ENCODE measurements at regions of chr9 and their contacts with region 1.

Region 1: DNA sequence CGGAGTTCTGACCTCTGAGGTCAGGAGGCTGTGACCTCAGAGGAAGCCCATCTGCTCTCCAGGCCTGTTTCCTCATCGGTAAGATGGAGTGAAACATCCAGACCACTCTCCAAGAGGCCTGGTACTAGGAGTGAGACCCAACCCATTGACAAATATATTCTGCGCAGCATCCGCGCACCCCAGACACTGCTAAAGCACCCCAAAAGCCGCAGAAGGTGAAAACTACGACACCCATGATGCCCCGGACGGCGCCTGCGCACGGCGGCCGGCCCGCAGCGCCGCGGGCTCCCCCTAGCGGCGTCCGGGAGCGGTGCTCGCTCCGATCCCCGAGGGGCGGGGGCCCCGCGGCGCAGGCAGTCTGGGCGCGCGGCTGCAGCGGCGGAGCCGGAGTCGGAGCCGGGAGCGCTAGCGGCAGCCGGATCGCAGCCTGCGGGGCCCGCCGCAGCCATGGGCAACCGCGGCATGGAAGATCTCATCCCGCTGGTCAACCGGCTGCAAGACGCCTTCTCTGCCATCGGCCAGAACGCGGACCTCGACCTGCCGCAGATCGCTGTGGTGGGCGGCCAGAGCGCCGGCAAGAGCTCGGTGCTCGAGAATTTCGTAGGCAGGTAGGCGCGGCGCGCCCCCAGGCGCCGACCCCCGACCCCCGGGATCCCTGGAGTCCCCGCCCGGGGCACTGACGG is at the start of gene DNM1:
- DNase-seq: peak; percentile 81
- H3K4me3 ChIP-seq: peak within 1 kb of the TSS; percentile 64
- H3K27ac ChIP-seq: no peak within 1 kb of the TSS
- H3K4me1 ChIP-seq: peaks cover 14% of the 10 kb centered on the region
- CTCF ChIP-seq: peak; percentile 78
- total RNA-seq, gene DNM1: 0.08 and 0.35 TPM in 2 replicates

Region 2: DNA sequence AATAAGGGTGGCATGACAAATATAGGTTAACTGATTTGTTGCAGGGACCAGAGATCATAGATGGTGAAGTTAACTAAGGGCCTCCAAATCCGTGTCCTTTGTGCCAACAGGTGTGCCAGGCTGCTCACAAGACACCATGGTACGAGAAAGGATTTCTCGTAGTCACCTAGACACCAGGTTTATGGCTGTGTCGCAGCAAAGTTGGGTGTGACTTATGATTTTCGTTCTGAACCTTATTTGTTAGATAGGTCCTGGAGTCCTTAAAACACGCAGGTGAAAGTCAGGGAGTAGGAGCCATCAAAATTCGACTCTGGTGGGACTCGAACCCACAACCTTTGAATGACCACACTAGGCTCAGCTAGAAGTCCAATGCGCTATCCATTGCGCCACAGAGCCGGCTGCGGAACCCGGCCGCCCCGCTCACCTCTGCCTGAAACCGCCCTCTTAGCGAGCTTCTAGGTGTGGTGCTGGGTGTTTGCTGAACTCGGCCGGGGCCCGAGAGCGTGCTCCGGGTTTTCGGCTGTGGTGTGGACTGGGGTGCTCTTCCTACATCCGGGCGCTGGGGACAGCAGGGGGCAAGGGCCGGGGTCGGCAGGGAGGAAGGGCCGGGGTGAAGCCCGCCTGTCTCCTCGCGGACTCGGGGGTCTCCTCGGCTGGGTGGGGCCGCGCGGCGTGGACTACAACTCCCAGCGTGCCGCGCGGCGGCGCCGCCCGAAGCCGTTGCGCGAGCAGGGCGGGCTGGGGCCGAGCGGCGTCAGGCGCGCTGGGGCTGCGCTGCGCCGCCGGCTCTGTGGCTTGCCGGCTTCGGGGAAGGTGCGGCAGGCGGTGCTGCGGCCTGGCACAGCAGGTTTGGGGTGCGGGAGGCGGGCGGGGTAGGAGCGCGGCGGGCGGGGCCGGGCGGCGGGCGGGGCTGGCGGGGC is 136.9 kb after region 1 on chr9 and contains the start of gene SLC27A4:
- CTCF ChIA-PET with region 1: no interaction called
- POLR2A ChIA-PET with region 1: interaction called, 3 read pairs
- intact Hi-C with region 1: loop called (anchors 5 kb)
- DNase-seq: peak; percentile 88
- H3K4me3 ChIP-seq: peak within 1 kb of the TSS; percentile 82
- H3K27ac ChIP-seq: peak within 1 kb of the TSS; percentile 18
- H3K4me1 ChIP-seq: peaks cover 5% of the 10 kb centered on the region
- CTCF ChIP-seq: no peak
- total RNA-seq, gene SLC27A4: 12.3 and 14.2 TPM in 2 replicates